ENCODE measurements at regions of chr5 and their contacts with region 1.

Region 1: DNA sequence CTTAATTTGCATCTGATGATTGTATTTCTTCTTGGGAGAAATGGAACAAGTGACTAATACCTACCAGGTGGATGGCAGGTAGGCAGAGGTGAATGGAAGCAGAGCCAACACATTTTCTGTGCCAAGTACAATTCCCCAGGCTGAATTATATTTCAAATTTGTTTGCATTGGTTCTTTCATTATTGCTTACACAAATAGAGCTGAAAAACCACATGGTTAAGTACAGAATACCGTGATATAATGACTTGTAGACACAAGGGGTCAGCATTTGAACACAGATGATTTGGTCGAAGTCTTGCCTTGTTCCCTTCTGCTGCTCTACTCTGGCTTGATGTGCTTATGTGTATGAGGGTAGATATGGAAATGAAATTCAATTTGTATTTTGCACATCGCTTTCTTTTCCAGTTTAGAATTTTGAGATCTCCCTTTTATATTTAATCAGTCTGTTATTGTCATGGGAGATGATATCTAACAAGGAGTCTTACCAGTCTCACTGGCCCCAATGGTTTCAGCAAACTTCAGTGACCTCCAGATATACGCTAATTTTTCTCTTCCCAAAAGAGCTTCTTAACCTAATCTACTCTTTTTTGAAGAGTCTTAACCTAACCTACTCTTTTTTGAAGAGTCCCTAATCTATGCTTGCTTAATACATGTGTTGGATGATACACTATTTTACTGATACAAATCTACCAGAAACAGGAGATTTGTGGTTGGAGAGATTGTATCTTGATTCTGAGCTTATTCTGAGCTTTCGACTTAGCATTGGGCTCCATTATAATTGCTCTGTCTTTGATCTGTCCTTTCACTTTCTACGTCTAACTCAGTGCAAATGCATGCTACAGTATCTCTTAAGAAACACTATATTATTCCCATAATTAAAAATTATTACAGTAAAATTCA is 88.1 kb downstream of the PCSK1 start:
- DNase-seq: peak; percentile 79
- H3K4me3 Mint-ChIP-seq: peak overlapping the region; percentile 2
- H3K27ac Mint-ChIP-seq: no peak overlapping the region
- H3K4me1 Mint-ChIP-seq: peaks cover 24% of the 10 kb centered on the region
- H3K27me3 Mint-ChIP-seq: peaks cover 35% of the 10 kb centered on the region

Region 2: DNA sequence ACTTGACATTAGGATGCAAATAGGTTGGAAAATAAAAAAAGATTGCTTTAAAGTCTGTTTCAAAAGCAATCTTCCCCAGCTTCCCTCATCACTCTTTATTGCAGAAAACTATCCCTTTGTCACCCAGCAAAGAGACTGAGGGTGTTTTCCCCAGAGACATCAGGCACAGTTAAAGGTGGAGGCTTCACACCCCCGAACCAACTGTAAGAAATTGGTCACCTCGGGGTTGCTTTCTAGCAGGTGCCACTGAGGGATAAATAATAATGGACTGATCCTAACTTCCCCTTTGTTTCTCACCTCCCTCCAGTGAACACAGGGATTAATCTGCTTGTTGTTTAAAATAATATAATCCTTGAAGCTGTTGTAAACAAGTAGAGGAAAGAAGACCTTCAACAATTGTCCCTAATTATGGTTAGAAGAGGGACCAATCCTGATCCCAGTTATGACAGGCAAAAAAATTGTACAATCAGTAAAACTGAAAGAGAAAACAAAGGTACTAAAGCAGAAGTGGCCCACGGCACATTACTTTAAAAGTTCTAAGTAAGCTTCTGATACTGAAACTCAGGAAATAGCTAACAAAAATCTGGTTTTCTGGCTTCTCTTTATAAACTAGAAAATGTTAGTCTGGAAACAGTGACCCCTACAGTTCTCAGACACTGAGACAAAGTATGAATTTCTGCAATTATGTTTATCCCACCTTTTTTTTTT is 94.7 kb after region 1 on chr5:
- intact Hi-C with region 1: loop called (anchors 5 kb)
- DNase-seq: no peak
- H3K4me3 Mint-ChIP-seq: no peak overlapping the region
- H3K27ac Mint-ChIP-seq: no peak overlapping the region
- H3K4me1 Mint-ChIP-seq: peaks cover 7% of the 10 kb centered on the region
- H3K27me3 Mint-ChIP-seq: peaks cover 47% of the 10 kb centered on the region

Region 3: GRCh38 chr5:96536991-96537785 is 192.3 kb after region 1 on chr5:
- intact Hi-C with region 1: loop called (anchors 2 kb)
- DNase-seq: peak; percentile 83
- H3K4me3 Mint-ChIP-seq: peak overlapping the region; percentile 56
- H3K27ac Mint-ChIP-seq: peak overlapping the region; percentile 85
- H3K4me1 Mint-ChIP-seq: peaks cover 27% of the 10 kb centered on the region
- H3K27me3 Mint-ChIP-seq: peaks cover 7% of the 10 kb centered on the region

Region 4: GRCh38 chr5:96601811-96602244 is 256.9 kb after region 1 on chr5:
- intact Hi-C with region 1: loop called (anchors 1 kb)
- DNase-seq: peak; percentile 89
- H3K4me3 Mint-ChIP-seq: no peak overlapping the region
- H3K27ac Mint-ChIP-seq: no peak overlapping the region
- H3K4me1 Mint-ChIP-seq: peaks cover 8% of the 10 kb centered on the region
- H3K27me3 Mint-ChIP-seq: peaks cover 15% of the 10 kb centered on the region

Region 5: DNA sequence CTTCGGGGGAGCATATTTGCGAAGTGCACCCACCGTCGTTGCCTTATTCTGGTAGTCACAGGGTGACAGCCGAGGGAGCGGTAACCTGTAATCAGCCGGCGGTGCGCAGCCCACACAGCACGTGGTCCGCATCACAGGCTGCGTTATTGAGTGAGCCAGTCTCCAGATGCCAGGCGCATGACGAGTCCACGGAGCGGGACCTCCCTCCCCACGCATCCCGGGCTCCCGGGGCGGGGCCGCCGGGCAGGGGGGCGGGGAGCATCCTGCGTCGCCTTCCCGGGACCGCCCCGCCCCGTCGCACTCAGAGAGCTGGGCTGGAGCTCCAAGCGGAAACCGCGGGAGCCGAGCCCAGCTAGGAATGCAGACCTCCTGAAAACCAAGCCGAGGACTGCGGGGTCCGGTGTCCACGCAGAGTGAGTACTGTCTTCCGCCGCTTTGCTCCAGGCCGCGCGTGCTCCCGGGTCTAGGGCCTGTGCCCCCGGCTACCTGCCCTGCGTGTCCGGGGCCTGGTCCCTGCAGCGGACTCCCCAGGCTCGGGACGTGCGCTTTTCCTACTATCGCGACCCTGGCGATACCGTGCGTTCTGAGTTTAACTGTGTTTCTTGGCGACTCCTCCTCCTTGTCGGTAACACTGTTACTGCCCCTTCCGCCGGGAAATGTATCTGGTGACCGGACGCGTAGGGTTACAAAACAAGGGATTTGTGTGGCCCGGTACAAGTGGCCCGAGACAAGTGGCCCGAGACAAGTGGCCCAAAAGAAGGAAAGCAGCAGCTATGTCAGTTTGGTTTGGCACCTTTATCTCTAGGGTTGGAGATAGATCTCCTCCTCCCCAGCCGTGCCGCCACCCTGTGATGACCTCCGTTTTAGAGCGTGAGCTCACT is 357.8 kb after region 1 on chr5:
- intact Hi-C with region 1: loop called (anchors 2 kb)
- DNase-seq: peak; percentile 92
- H3K4me3 Mint-ChIP-seq: peak overlapping the region; percentile 93
- H3K27ac Mint-ChIP-seq: peak overlapping the region; percentile 88
- H3K4me1 Mint-ChIP-seq: peaks cover 30% of the 10 kb centered on the region
- H3K27me3 Mint-ChIP-seq: no peaks in the 10 kb centered on the region

Region 6: DNA sequence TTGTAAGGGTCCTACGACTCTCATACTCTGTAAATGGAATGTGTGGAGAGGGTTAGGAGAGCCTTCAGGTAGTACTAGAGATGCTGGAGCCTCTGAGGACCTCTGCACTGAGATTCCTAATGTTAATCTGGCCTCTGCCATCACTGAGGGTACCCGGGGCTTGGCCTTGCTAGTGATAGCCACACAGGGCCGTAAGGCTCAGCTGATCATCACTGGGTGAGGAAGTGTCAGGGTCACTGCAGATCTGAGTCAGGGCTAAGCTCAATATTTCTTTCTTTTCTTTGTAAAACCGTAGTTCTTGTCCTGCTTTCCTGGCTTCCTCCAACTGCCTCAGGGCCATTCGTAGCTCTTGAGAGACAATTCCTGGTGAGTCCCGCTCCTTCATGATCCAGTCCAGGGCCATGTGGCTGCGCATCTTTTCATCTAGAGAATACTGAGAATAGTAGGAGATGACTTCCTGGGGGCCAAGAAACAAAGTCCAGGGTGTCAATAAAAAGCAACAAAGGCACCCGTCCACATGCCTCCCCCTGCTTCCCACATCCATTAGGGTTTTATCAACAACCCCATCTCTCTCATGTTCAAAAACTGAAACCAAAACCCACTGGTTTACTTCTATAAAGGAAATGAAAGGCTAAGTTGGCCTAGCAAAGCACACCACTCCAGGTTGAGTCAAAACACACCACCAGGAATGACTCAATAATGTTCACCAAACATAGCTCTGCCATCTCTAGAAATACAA is 749.8 kb after region 1 on chr5:
- intact Hi-C with region 1: loop called (anchors 10 kb)
- DNase-seq: peak; percentile 83
- H3K4me3 Mint-ChIP-seq: peak overlapping the region; percentile 56
- H3K27ac Mint-ChIP-seq: peak overlapping the region; percentile 83
- H3K4me1 Mint-ChIP-seq: peaks cover 21% of the 10 kb centered on the region
- H3K27me3 Mint-ChIP-seq: peaks cover 36% of the 10 kb centered on the region

Region 7: GRCh38 chr5:97162045-97162444 is 817.1 kb after region 1 on chr5:
- intact Hi-C with region 1: loop called (anchors 10 kb)
- DNase-seq: peak; percentile 87
- H3K4me3 Mint-ChIP-seq: no peak overlapping the region
- H3K27ac Mint-ChIP-seq: no peak overlapping the region
- H3K4me1 Mint-ChIP-seq: peaks cover 5% of the 10 kb centered on the region
- H3K27me3 Mint-ChIP-seq: no peaks in the 10 kb centered on the region

Measured in activated CD4-positive, alpha-beta T cell treated with anti-CD3 and anti-CD28 coated beads, Interleukin-2, amount 10 ng/mL, durations not matched to agents 24 days and 14 days (primary cell).